ENCODE measurements at regions of chr11 and their contacts with region 1.

Region 1: GRCh38 chr11:98589967-98590366 is 430.8 kb upstream of the CNTN5 start:
- DNase-seq: no peak
- H3K4me3 ChIP-seq: no peak overlapping the region
- H3K27ac ChIP-seq: no peak overlapping the region
- H3K4me1 ChIP-seq: no peaks in the 10 kb centered on the region
- H3K27me3 ChIP-seq: no peaks in the 10 kb centered on the region
- CTCF ChIP-seq: no peak

Region 2: DNA sequence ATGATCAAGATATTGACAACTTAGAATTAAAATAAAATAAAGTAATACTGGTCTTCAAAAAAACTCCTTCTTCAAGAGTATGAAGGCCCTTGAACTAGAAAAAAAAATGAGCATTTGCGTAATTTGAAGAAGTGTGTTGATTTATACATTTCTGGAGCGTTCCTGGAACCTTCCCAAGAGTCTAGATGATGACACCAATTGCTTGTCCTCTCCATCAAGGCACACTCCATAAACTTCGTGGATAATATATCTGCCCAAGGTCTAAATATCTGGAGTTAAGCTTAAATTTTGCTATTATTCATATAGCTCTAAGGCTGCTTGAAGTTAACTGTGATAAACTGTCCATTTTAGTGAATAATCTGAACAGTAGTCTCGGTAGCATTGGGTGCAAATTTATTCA is 69.5 kb after region 1 on chr11:
- intact Hi-C with region 1: loop called (anchors 5 kb)
- DNase-seq: no peak
- H3K4me3 ChIP-seq: no peak overlapping the region
- H3K27ac ChIP-seq: no peak overlapping the region
- H3K4me1 ChIP-seq: no peaks in the 10 kb centered on the region
- H3K27me3 ChIP-seq: no peaks in the 10 kb centered on the region
- CTCF ChIP-seq: no peak